ACHN (cell line): ENCODE measurements at regions of chr3 and their contacts with region 1.

Region 1: DNA sequence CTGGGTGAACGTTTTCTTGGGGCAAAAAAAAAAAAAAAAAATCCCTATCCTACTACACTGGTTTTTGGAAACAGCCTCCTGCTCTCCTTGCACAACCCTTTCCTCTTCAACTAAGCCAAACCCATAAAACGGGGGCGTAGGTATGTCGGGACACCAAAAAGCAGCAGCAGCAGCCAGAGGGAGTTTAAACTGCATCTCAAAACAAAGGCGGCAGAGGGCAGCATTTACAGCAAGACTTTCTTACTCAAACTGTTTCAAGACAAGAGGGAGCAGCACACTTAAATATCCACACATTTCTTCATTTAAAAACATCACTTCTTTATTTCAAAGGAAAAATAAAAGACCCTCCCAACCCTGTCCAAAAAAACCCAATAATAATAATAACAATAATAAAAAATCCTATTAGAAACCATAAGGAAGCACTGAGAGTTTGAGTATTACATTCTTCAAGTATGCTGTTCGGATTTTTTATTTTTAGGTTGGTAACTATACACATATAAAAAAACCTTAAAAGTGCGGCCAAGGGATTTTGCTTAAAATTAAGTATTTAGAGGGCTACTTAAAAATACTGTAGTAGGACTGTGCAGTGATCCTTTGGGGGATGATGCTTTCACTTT is 43.9 kb upstream of the PLXND1 start:
- DNase-seq: peak; percentile 59

Region 2: GRCh38 chr3:129521611-129522010 is 128.8 kb before region 1 on chr3:
- in situ Hi-C with region 1: no loop called
- DNase-seq: no peak

Region 3: DNA sequence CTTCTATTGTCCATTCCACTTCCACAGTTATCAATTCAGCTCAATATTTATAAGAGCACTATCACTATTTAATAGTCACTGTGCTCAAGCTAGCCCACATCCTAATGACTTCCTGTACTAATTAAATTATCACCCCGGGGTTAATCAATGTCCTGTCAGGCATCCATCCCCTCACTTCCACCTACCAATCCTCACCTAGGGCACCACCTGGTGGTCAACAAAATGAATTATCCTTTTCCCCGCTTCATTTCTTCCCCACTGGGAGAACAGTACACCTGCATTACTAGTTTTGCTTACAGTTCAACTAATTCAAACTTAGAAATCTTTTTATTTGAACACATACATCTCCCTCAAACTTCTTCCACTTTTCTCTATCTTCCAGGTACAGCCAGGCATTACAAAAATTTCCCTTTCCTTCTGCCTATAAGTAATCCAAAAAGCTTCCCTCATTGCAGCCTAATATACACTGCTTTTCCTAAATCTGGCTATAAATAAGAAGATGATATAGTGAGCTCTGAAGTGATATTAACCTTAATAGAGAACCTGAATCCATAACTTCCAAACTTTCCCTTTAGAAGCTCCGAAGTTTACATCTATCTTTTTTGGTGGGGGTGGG is 174.7 kb after region 1 on chr3:
- in situ Hi-C with region 1: loop called (anchors 25 kb)
- DNase-seq: peak; percentile 62